Cardiac septum (tissue), 1 donor: ENCODE measurements at regions of chr1 and their contacts with region 1.

Region 1: DNA sequence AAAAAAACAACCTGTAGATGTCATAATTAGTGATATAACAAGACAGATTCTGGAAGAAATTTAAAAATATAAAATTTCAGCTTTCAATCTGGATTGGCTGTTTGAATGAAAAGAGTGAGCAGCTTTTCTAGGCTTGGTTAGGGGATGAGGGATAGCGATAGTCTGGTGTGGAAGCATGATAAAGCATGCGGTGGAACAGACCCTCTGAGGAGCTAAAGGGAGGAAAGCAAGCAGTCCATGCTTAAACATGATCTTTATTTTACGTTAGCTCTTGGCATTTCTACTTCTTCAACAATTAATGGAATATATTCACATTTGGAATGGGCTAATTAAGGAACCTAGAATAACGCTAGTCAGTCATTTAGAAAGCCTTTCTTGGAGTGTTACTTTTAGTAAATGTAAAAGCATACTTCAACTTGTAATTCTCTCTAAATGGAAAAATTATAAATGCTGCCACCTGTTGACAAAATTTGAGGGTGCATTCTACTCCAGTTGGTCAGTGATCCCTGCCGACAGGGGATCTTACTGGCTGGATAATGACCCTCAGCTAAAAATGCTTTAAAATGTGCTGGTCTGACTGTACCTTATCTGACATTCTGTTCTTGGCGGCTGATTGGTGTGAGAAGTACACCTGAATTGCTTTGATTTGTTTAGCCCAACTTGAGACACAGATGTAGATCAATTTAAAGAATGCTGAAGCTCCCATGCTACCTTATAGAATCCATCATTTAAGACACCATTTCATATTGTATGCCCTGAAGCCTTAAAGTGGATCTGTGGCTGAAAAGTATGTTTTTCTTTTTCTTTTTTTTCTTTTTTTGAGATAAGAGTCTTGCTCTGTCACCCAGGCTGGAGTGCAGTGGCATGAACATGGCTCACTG is 61.2 kb downstream of the AK4 start:
- DNase-seq: no peak

Region 2: DNA sequence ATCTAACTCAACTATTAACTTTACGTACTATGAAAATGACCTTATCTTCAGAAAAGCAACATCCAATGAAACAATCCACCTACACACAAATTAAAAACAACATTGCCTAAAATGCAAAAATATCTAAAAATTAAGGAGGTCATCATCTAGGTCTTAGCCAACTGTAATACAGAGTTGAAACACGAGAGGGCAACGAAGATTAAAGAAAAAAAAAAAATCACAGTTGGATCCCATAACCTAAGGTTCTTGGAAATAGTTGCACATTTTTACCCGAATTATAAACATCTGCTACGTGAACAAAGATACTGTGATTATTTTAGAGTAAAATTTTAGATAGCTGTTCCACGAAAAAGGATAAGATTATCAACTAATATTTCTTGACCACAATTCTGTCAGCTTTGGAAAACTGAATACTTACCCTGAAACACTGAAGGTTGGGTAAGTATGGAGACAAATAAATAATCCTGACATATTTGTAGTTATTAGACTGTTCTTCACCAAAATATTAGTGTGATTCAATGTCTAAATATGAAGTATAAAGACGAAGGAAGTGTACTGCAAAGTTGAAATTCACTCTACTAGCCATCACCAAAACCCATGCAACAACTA is 149.2 kb before region 1 on chr1:
- intact Hi-C with region 1: loop called (anchors 2 kb)
- DNase-seq: no peak

Region 3: DNA sequence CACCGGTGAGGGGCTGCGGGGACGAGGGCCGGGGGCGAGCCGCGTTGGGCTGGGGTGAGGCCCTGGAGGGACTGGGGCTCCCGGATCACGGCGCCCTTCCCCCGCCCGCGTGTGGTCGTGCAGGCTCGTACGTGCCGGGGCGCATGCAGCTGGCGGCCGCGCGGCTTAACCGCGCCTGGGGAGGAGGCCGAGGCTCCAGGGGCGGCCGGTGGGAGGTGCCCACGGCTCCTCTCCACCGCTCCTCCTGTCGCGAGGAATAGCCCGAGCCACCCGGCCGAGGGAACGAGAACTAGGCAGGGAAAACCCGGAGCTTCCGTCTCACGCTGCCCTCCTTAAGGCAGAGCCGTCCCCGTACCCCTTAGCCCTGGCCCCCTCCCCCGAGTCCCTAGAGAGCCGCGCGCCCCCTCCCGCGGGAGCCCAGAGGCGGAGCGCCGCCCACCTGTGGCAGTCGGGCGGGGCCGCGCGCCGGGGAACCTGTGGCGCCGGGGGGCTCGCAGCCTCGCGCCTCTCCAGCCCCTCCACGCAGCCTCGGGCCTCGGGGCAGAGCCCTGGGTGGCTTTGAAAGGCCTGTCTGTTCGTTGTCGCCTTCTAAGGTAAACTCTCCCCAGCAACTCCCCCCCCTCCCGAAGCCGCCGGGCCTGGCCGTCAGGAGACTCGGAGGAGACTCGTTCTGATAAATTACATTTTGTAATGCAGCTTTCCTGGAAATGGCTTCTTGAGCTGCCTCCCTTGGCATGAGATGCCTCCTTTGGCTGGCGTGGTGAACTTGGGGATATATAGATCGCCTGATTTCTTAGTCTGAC is 60.5 kb before region 1 on chr1:
- intact Hi-C with region 1: loop called (anchors 5 kb)
- DNase-seq: peak; percentile 79